Left ventricle myocardium inferior (tissue), 1 donor: ENCODE measurements at regions of chr11 and their contacts with region 1.

Region 1: DNA sequence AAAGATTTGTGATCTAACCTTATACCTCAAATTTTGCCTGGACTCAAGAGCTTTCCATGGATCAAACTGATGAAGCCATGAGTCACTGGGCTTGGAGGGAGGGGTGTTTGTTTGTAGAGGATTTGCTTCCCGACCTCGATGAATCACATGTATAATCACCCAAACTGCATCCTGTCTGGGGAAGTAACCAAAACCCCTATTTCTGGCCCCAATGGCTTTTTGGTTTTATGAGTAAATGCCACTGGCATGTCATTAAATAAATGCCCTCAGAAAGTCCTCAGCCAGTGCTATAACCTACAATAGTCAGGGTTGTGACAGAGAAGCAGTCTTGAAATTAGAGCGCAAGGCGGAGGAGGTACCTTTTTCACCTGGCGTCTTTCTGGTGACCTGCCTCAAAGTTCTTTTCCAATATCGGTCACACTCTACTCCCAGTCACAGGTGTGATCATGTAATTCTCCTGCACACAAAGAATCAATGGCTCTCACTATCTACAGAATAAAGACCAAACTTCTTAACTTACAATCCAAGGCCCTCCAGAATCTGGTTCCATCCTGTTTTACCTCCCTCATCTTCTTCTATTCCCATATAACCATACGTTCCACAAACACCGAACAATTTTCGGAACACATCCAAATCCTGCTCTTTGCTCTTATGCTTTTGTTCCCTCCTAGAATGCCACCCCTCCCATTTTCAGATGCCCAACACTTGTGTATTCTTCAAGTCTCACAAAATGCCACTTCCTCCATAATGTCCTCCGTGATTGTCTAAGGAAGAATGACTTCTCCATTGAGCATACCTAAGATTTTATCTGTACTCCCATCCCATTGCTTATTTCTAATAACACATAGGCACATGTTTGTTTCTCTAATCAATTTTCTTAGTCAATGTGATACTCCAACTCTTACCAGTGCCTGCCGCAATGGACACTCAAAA is 81.3 kb upstream of the BLID start:
- DNase-seq: no peak
- H3K4me3 ChIP-seq: no peak overlapping the region
- H3K27ac ChIP-seq: no peak overlapping the region
- H3K4me1 ChIP-seq: peaks cover 23% of the 10 kb centered on the region
- H3K27me3 ChIP-seq: no peaks in the 10 kb centered on the region
- CTCF ChIP-seq: no peak

Region 2: DNA sequence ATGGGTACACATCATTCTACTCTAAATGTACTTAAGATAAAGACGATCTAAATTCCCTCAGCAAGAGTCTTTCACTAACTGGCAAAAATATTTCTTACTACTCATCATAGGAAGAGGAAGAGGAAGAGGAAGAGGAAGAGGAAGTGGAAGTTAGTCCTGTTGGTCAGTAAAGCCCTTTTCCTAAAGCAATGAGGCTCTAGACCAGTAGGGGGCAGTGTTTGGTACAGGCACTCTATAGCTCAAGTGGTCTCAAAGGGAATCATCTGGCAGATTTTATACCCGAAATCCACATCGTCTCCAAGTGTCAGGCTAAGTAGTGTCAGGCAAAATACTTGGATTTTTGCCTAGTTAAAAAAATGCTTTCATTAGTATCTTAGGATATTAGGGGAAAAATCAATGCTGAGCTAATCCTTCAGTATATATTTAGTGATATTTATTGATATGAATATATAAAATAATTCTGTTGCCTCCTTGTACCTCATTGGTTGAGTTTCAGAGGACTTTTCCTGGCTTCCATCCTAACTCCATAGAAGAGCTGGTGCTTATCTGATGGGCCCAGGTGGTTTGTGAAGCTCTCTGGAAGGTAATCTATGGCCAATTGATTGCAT is 89.0 kb before region 1 on chr11:
- intact Hi-C with region 1: loop called (anchors 10 kb)
- DNase-seq: no peak
- H3K4me3 ChIP-seq: no peak overlapping the region
- H3K27ac ChIP-seq: peak overlapping the region; percentile 81
- H3K4me1 ChIP-seq: peaks cover 28% of the 10 kb centered on the region
- H3K27me3 ChIP-seq: no peaks in the 10 kb centered on the region
- CTCF ChIP-seq: peak; percentile 60

Region 3: GRCh38 chr11:122159173-122159721 is 38.1 kb before region 1 on chr11:
- intact Hi-C with region 1: no loop called
- DNase-seq: peak; percentile 20
- H3K4me3 ChIP-seq: peak overlapping the region; percentile 15
- H3K27ac ChIP-seq: peak overlapping the region; percentile 72
- H3K4me1 ChIP-seq: no peaks in the 10 kb centered on the region
- H3K27me3 ChIP-seq: peaks cover 12% of the 10 kb centered on the region
- CTCF ChIP-seq: no peak